Thyroid gland (tissue), 4 donors: ENCODE measurements at regions of chr2 and their contacts with region 1.

Region 1: GRCh38 chr2:227125506-227125905 is 38.5 kb downstream of the COL4A4 start:
- DNase-seq: no peak
- H3K4me3 ChIP-seq: no peak overlapping the region
- H3K27ac ChIP-seq: no peak overlapping the region
- H3K4me1 ChIP-seq: no peaks in the 10 kb centered on the region
- H3K27me3 ChIP-seq: no peaks in the 10 kb centered on the region
- CTCF ChIP-seq: no peak
- POLR2A ChIP-seq: no peak

Region 2: GRCh38 chr2:227238238-227239237 is 113.0 kb after region 1 on chr2:
- intact Hi-C with region 1: loop called (anchors 2 kb)
- DNase-seq: peak; percentile 77 to 86
- H3K4me3 ChIP-seq: no peak overlapping the region
- H3K27ac ChIP-seq: no peak overlapping the region
- H3K4me1 ChIP-seq: peaks cover 0 to 6% of the 10 kb centered on the region in 2 donors
- H3K27me3 ChIP-seq: no peaks in the 10 kb centered on the region
- CTCF ChIP-seq: peak; percentile 89 to 96 (median 92)
- POLR2A ChIP-seq: no peak